OCI-LY7 (cell line): ENCODE measurements at regions of chr3 and their contacts with region 1.

Region 1: GRCh38 chr3:172710664-172711453 is at the start of gene NCEH1:
- DNase-seq: peak; percentile 96
- H3K4me3 ChIP-seq: peak within 1 kb of the TSS; percentile 88
- H3K27ac ChIP-seq: peak within 1 kb of the TSS; percentile 32
- H3K4me1 ChIP-seq: peaks cover 20% of the 10 kb centered on the region
- CTCF ChIP-seq: peak; percentile 83
- total RNA-seq, gene NCEH1: 2.3 and 2.7 TPM in 2 replicates

Region 2: GRCh38 chr3:172501560-172501959 is 209.3 kb before region 1 on chr3:
- CTCF ChIA-PET with region 1: no interaction called
- POLR2A ChIA-PET with region 1: no interaction called
- intact Hi-C with region 1: no loop called
- DNase-seq: no peak
- H3K4me3 ChIP-seq: no peak overlapping the region
- H3K27ac ChIP-seq: no peak overlapping the region
- H3K4me1 ChIP-seq: no peaks in the 10 kb centered on the region
- CTCF ChIP-seq: no peak

Region 3: GRCh38 chr3:172673210-172673679 is 37.6 kb before region 1 on chr3:
- CTCF ChIA-PET with region 1: interaction called, 3 read pairs
- POLR2A ChIA-PET with region 1: interaction called, 5 read pairs
- intact Hi-C with region 1: loop called (anchors 2 kb)
- DNase-seq: peak; percentile 75
- H3K4me3 ChIP-seq: no peak overlapping the region
- H3K27ac ChIP-seq: no peak overlapping the region
- H3K4me1 ChIP-seq: no peaks in the 10 kb centered on the region
- CTCF ChIP-seq: peak; percentile 94

Region 4: DNA sequence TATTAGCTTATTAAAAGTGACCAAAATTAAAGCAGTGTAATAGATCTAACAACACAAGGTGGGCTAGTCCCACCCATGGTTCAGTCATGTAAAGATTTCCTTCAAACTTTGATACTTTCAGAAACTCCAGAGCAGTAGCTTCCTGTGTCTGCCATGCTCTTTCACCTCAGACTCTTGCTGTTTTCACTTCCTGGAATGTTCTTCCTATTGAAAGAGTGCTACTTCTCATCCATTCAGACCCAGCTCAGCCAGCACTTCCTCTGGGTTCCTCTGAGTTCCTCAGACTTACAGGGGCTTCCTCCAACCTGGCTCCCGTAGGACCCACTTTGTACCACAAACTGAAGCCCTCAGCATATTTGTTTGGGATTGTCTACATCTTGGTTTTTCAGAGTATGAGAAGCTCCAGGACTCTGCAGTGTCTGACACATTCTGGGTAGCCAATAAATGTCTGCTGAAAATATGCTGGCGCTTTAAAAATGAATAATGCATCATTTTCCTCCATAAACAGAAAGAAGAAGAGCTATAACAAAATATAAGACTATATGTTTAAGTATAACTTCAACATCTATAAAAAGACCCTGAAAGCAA is 18.0 kb before region 1 on chr3:
- CTCF ChIA-PET with region 1: interaction called, 3 read pairs
- POLR2A ChIA-PET with region 1: interaction called, 12 read pairs
- intact Hi-C with region 1: no loop called
- DNase-seq: peak; percentile 48
- H3K4me3 ChIP-seq: peak overlapping the region; percentile 7
- H3K27ac ChIP-seq: peak overlapping the region; percentile 31
- H3K4me1 ChIP-seq: peaks cover 16% of the 10 kb centered on the region
- CTCF ChIP-seq: no peak